ENCODE measurements at regions of chrX and their contacts with region 1.

Region 1: DNA sequence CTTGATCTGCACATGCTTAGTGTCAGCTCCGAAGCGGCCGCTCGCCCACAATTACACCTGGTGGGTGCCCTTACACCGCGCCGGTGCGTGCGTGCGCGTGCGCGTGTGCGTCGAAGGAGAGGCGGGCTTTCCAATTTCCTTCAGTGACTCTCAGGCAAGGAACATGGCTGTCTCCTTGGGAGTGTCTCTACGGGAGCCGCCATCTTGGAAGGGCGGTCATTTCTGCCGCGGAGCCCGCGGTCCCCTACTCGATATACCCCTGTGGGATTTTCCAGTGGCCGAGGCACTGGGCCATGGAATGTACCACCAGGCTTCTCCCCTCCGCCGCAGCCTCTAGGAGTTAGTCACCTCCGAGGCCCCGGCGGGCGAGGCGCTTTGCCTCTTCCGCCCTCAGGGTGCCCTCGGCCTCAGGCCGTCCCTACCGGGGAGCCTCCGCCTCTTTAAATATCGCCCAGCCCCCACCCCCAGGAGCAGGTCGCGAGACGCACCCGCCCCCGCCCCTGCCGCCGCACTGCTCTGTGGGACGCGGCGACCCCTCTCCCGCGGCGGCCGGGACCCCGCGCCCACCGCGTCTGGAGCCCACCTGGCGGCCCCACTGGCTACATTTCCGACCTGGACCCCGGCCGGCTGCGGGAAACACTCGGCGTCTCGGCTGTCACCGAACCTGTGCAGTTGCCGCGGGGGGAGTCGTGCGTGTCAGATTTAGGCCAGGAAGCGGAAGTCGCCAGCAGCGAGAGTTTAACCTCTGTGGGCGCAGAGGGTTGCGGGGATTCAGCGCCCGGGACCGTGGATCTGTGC is at the start of gene ZNF41:
- DNase-seq: peak; percentile 61 to 85 (median 79)
- H3K4me3 ChIP-seq: peak within 1 kb of the TSS; percentile 81
- H3K4me3 Mint-ChIP-seq: peak within 1 kb of the TSS; percentile 80 to 98 (median 95)
- H3K27ac ChIP-seq: peak within 1 kb of the TSS; percentile 80
- H3K27ac Mint-ChIP-seq: peak within 1 kb of the TSS; percentile 89 to 97 (median 96)
- H3K4me1 ChIP-seq: peaks cover 13% of the 10 kb centered on the region
- H3K4me1 Mint-ChIP-seq: peaks cover 31 to 51% (median 35%) of the 10 kb centered on the region in 3 donors
- H3K27me3 ChIP-seq: no peaks in the 10 kb centered on the region
- H3K27me3 Mint-ChIP-seq: peaks cover 0 to 2% of the 10 kb centered on the region in 2 donors
- total RNA-seq, gene ZNF41: 11.9 TPM

Region 2: GRCh38 chrX:47467131-47467530 is 15.6 kb before region 1 on chrX:
- CTCF ChIA-PET with region 1: no interaction called
- POLR2A ChIA-PET with region 1: interaction called, 13 read pairs
- DNase-seq: no peak
- H3K4me3 ChIP-seq: no peak overlapping the region
- H3K4me3 Mint-ChIP-seq: no peak overlapping the region
- H3K27ac ChIP-seq: no peak overlapping the region
- H3K27ac Mint-ChIP-seq: no peak overlapping the region
- H3K4me1 ChIP-seq: no peaks in the 10 kb centered on the region
- H3K4me1 Mint-ChIP-seq: peaks cover 5 to 18% (median 11%) of the 10 kb centered on the region in 3 donors
- H3K27me3 ChIP-seq: no peaks in the 10 kb centered on the region
- H3K27me3 Mint-ChIP-seq: peaks cover 0 to 8% of the 10 kb centered on the region in 2 donors

Region 3: DNA sequence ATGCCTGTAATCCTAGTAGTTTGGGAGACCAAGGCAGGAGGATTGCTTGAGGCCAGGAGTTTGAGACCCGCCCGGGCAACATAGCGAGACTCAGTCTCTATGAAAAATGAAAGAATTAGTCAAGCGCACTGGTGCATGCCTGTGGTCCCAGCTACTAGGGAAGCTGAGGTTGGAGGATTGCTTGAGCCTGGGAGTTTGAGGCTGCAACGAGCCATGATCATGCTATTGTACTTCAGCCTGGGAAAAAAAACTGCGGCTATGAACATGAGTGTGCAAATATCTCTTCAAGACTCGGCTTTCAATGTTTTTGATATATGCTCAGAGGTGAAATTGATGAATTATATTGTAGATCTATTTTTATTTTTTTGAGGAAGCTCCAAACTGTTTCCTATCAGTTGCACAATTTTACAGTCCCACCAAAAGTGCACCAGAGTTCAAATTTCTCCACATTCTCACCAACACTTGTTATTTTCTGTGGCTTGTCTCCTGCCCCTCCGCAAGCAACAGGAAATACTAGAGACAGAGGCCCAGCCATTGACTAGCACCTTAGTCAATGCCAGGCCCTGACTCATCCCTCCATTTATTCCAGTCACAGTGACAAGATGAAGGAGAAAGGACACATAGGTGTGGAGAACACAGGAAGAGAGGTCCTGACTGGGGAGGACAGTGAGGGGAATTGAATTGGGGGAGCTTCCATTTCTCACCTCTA is 33.4 kb after region 1 on chrX:
- CTCF ChIA-PET with region 1: no interaction called
- POLR2A ChIA-PET with region 1: no interaction called
- DNase-seq: no peak
- H3K4me3 ChIP-seq: no peak overlapping the region
- H3K4me3 Mint-ChIP-seq: peak overlapping the region in 1 of 7 donors; percentile 58
- H3K27ac ChIP-seq: no peak overlapping the region
- H3K27ac Mint-ChIP-seq: peak overlapping the region in 1 of 8 donors; percentile 29
- H3K4me1 ChIP-seq: peaks cover 4% of the 10 kb centered on the region
- H3K4me1 Mint-ChIP-seq: peaks cover 4 to 23% (median 12%) of the 10 kb centered on the region in 3 donors
- H3K27me3 ChIP-seq: no peaks in the 10 kb centered on the region
- H3K27me3 Mint-ChIP-seq: peaks cover 0 to 15% of the 10 kb centered on the region in 2 donors

Region 4: DNA sequence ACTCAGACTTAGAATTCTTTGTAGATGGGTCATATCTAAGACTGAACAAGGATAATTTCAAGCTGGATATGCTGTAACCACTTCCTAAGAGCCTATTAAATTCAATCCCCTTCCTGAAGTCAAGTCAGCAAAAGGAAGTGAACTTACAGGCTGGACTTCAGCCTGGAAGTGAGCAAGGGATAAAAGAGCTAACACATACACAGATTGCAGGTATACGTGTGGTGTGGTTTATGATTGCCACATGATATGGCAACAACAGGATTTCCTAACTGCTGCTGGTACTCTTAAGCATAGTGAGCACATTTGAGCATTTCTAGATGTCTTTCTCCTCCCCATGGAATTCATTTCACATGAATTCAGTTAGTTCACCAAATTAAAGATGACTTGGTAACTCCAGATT is 214.5 kb after region 1 on chrX:
- CTCF ChIA-PET with region 1: no interaction called
- POLR2A ChIA-PET with region 1: no interaction called
- DNase-seq: no peak
- H3K4me3 ChIP-seq: no peak overlapping the region
- H3K4me3 Mint-ChIP-seq: no peak overlapping the region
- H3K27ac ChIP-seq: no peak overlapping the region
- H3K27ac Mint-ChIP-seq: no peak overlapping the region
- H3K4me1 ChIP-seq: no peaks in the 10 kb centered on the region
- H3K4me1 Mint-ChIP-seq: no peaks in the 10 kb centered on the region
- H3K27me3 ChIP-seq: no peaks in the 10 kb centered on the region
- H3K27me3 Mint-ChIP-seq: peaks cover 5 to 15% of the 10 kb centered on the region in 2 donors

Measured in CD8-positive, alpha-beta memory T cell (primary cell).